Activated CD4-positive, alpha-beta memory T cell treated with anti-CD3 and anti-CD28 coated beads, Interleukin-2, amount 10 ng/mL, durations not matched to agents 7 days and 5 days (primary cell): ENCODE measurements at regions of chr17 and their contacts with region 1.

Region 1: DNA sequence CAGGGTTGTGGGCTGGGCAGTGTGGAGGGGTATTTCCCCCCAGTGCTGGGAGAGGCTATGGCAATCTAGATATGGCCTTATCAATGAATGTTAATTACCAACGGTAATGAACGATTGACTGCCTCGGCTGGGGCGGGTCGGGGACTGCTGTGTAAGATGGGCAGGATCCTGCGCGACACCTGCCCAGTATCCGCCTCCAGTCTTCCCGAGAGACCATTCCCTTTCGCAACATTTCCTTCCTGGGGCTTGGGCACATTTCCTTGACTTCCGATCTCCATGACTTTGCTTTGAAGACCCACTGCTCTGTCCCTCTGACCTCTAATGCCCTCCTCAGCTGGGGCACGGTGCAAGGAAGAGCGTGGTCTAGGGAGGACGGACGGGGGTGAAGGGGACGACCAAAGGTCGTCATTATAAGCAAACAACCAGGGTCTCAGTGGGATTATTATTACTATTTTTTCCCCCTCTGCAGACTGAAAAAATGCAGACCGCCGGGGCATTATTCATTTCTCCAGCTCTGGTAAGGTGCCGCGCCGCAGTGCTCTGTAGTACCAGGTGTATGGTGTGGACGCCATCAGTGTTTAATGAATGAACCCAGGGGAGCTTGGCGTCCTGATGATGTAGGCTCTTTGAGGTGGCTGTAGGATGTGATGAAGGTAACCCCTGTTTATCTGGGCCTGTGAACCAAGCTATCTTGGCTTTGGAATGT is 506 bp downstream of the ATP5MC1 start:
- DNase-seq: no peak
- H3K4me3 Mint-ChIP-seq: peak overlapping the region; percentile 91
- H3K27ac Mint-ChIP-seq: peak overlapping the region; percentile 88
- H3K4me1 Mint-ChIP-seq: peaks cover 42% of the 10 kb centered on the region
- H3K27me3 Mint-ChIP-seq: no peaks in the 10 kb centered on the region

Region 2: DNA sequence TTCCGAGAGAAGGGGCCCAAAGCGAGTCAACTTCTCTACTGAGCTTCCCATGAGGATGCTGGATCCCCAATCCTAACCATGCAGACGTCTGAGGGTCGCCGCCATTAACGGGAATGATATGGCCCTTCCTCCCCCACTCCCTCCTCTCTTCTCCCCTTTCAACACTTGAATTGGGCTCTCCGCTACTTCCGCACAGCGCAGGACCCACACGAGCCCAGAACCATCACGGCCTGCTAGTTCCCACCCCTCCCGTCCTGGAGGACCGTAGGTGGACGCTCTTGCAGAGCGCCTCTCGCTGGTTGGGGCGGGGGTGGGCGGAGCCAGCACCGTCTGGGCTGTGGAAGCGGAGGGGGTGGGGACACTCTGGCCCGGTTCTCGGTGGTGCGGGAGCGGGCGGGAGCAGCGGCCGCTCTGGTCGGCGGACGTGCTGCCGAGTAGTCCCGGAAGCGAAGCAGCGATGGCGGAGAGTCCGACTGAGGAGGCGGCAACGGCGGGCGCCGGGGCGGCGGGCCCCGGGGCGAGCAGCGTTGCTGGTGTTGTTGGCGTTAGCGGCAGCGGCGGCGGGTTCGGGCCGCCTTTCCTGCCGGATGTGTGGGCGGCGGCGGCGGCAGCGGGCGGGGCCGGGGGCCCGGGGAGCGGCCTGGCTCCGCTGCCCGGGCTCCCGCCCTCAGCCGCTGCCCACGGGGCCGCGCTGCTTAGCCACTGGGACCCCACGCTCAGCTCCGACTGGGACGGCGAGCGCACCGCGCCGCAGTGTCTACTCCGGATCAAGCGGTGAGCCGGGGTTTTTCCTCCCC is 15.2 kb after region 1 on chr17 and contains the start of gene UBE2Z:
- CTCF ChIA-PET with region 1: interaction called, 24 read pairs
- POLR2A ChIA-PET with region 1: interaction called, 128 read pairs
- DNase-seq: peak; percentile 90
- H3K4me3 Mint-ChIP-seq: peak within 1 kb of the TSS; percentile 85
- H3K27ac Mint-ChIP-seq: peak within 1 kb of the TSS; percentile 89
- H3K4me1 Mint-ChIP-seq: peaks cover 50% of the 10 kb centered on the region
- H3K27me3 Mint-ChIP-seq: no peaks in the 10 kb centered on the region
- total RNA-seq, gene UBE2Z: 83.3 to 85.1 TPM

Region 3: DNA sequence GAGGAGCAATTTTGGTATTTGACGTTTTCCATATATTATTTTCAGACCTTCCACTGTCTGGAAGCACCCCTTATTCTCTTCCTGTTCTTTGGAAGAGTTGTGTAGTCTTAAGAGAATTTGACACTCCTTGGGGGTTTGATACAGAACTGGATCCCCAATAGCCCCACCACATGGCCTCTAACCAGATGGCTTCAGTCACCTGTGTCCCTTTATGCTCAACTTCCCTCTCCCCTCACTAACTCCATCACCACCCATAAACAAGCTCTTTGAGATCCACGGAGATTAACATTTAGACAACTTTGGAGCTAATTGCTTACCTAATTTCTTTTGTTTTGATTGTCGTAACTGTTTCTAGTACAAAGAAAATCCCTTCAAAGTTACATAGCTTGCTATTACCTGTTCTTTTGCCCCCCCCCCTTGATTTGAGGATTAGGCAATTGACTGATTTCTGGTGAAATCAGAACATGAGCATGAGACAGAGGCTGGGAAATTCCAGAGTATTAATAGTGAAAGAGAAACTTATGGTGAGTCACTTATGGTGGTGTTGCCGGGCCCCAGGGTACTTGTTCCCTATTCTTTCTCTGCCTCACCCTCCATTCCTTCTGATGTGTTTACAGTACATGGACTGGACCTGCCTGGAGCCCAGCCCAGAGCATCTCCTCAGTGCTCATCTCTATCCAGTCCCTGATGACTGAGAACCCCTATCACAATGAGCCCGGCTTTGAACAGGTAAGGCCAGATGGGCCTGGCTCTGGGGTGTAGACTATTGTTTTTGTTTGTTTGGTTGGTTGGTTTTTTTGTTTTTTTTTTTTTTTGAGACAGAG is 22.6 kb after region 1 on chr17:
- CTCF ChIA-PET with region 1: no interaction called
- POLR2A ChIA-PET with region 1: interaction called, 128 read pairs
- DNase-seq: peak; percentile 54
- H3K4me3 Mint-ChIP-seq: peak overlapping the region; percentile 72
- H3K27ac Mint-ChIP-seq: peak overlapping the region; percentile 94
- H3K4me1 Mint-ChIP-seq: peaks cover 58% of the 10 kb centered on the region
- H3K27me3 Mint-ChIP-seq: no peaks in the 10 kb centered on the region

Region 4: GRCh38 chr17:48944519-48945260 is 51.6 kb after region 1 on chr17 and contains the start of gene SNF8:
- CTCF ChIA-PET with region 1: interaction called, 3 read pairs
- POLR2A ChIA-PET with region 1: interaction called, 36 read pairs
- DNase-seq: peak; percentile 95
- H3K4me3 Mint-ChIP-seq: peak within 1 kb of the TSS; percentile 97
- H3K27ac Mint-ChIP-seq: peak within 1 kb of the TSS; percentile 95
- H3K4me1 Mint-ChIP-seq: peaks cover 23% of the 10 kb centered on the region
- H3K27me3 Mint-ChIP-seq: peaks cover 2% of the 10 kb centered on the region
- total RNA-seq, gene SNF8: 94.9 to 97.9 TPM